ENCODE measurements at regions of chr6 and their contacts with region 1.

Region 1: GRCh38 chr6:169723200-169723909 is 945 bp downstream of the PHF10 start:
- DNase-seq: peak; percentile 49
- H3K4me3 Mint-ChIP-seq: peak overlapping the region; percentile 91
- H3K27ac Mint-ChIP-seq: peak overlapping the region; percentile 95
- H3K4me1 Mint-ChIP-seq: peaks cover 49% of the 10 kb centered on the region
- H3K27me3 Mint-ChIP-seq: peaks cover 8% of the 10 kb centered on the region

Region 2: DNA sequence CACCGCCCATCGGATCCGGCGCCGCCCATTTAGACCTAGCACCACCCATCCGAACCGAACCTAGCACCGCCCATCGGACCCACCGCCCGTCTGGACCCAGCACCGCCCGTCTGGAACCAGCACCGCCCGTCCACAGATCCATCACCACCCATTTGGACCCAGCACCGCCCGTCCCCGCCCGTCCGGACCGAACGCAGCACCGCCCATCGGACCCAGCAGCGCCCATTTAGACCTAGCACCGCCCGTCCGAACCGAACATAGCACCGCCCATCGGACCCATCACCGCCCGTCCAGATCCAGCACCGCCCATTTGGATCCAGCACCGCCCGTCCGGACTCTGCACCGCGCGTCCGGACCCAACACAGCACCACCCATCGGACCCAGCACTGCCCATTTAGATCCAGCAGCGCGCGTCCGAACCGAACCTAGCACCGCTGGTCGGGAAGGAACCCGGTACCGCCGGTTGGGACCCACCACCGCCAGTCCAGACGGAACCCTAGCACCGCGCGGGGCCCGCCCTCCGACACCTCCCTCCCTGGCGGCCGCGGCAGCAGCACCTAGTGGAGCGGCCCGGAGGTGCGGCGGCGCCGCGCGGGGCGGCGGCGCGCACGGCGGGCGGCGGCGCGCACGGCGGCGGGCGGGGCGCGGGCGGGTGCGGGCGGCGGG is 1897.0 kb before region 1 on chr6:
- intact Hi-C with region 1: loop called (anchors 5 kb)
- DNase-seq: peak; percentile 65
- H3K4me3 Mint-ChIP-seq: peak overlapping the region; percentile 89
- H3K27ac Mint-ChIP-seq: peak overlapping the region; percentile 61
- H3K4me1 Mint-ChIP-seq: peaks cover 52% of the 10 kb centered on the region
- H3K27me3 Mint-ChIP-seq: peaks cover 67% of the 10 kb centered on the region

Region 3: DNA sequence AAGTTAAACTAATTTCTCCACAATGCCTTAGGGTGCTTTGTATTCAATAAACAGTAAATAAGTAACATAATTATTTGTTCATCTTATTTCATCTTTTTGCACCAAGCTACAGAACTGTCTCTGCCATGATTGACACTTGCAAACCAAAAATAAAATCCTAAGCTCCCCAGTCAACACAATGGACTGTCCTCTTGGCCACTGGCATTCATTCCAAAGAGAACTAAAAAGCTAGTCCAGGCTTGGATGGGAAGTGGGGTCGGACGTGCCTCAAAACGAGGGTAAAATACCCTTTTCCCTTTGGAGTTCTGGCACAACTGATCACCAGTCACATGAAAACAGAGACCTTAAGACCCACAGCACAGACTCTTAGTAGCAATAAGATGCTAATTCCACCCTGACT is 403.3 kb before region 1 on chr6:
- intact Hi-C with region 1: no loop called
- DNase-seq: no peak
- H3K4me3 Mint-ChIP-seq: no peak overlapping the region
- H3K27ac Mint-ChIP-seq: no peak overlapping the region
- H3K4me1 Mint-ChIP-seq: no peaks in the 10 kb centered on the region
- H3K27me3 Mint-ChIP-seq: peaks cover 2% of the 10 kb centered on the region

Region 4: GRCh38 chr6:169654598-169655391 is 68.6 kb before region 1 on chr6:
- intact Hi-C with region 1: loop called (anchors 2 kb)
- DNase-seq: peak; percentile 67
- H3K4me3 Mint-ChIP-seq: peak overlapping the region; percentile 87
- H3K27ac Mint-ChIP-seq: peak overlapping the region; percentile 44
- H3K4me1 Mint-ChIP-seq: no peaks in the 10 kb centered on the region
- H3K27me3 Mint-ChIP-seq: no peaks in the 10 kb centered on the region

Region 5: GRCh38 chr6:169709293-169709692 is 14.1 kb before region 1 on chr6:
- intact Hi-C with region 1: no loop called
- DNase-seq: no peak
- H3K4me3 Mint-ChIP-seq: no peak overlapping the region
- H3K27ac Mint-ChIP-seq: no peak overlapping the region
- H3K4me1 Mint-ChIP-seq: peaks cover 38% of the 10 kb centered on the region
- H3K27me3 Mint-ChIP-seq: no peaks in the 10 kb centered on the region

Region 6: DNA sequence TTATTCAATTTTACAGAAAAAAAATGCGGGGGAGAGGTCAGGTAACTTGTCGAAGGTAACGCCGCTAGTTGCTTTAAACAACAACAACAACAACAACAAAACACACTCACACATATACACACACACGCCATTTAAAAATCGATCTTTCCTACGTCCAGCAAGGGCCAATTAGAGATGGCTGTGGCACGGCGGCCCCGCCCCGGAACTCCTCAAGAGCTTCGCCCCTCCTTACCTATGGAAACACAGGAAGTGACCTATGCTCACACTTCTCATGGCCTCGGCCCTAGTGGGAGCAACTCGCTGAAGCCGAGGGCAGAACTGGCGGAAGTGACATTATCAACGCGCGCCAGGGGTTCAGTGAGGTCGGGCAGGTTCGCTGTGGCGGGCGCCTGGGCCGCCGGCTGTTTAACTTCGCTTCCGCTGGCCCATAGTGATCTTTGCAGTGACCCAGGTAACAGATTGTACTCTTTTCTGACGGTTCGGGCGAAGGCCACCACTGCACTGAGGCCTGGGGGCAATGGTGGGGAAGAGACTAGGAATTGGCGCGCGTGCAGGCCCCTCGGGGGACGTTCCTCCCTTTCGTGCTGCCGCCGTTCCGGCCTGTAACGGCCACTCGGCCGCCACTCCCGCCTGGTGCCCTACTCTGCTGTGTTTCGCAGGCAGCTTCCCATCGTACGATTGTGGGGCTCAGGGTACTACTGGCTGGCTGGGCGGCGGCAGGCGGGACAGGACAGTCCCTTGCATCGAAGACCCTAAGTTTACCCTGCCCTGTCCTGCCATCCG is 830.8 kb after region 1 on chr6 and contains the start of gene TBP:
- intact Hi-C with region 1: loop called (anchors 1 kb)
- DNase-seq: peak; percentile 96
- H3K4me3 Mint-ChIP-seq: no peak within 1 kb of the TSS
- H3K27ac Mint-ChIP-seq: no peak within 1 kb of the TSS
- H3K4me1 Mint-ChIP-seq: peaks cover 34% of the 10 kb centered on the region
- H3K27me3 Mint-ChIP-seq: no peaks in the 10 kb centered on the region
- total RNA-seq, gene TBP: 27.8 and 29.6 TPM in 2 replicates

Measured in activated T-helper 1 cell treated with anti-CD3 and anti-CD28 coated beads, Interleukin-12 subunit alpha, Interleukin-12 subunit beta, Interleukin-2, Interleukin-4 antibody, amounts not matched to agents 30 ng/mL and 10 ng/mL and 1 ng/mL, durations not matched to agents 14 hours and 24 hours and 36 hours (primary cell).